ENCODE measurements at regions of chr1 and their contacts with region 1.

Region 1: DNA sequence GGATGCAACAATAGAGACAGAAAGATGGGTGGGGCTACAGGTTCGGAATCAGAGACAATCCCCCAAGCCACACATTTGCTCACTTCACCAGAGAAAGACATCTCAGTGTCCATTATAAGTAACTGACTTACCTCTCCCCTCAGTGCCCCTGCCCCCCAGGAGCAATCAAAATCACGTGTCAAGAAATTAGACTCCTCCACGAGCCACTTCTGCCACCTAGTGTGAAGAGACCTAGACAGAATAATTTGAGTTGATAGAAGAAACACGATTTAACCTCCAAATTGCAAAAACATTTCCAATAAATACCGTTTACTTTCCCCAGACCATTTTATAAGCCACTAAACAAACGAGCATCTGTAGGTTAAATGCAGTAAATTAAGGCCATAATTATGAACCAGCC is 123.2 kb downstream of the SLC30A10 start:
- DNase-seq: no peak
- ATAC-seq: no peak
- H3K4me3 ChIP-seq: no peak overlapping the region
- H3K27ac ChIP-seq: no peak overlapping the region
- H3K4me1 ChIP-seq: no peaks in the 10 kb centered on the region
- H3K27me3 ChIP-seq: peaks cover 0 to 3% (median 0%) of the 10 kb centered on the region in 9 donors
- CTCF ChIP-seq: peak in 11 of 12 donors; percentile 9 to 42 (median 24)
- POLR2A ChIP-seq: no peak

Region 2: GRCh38 chr1:219304227-219305226 is 500.7 kb before region 1 on chr1:
- intact Hi-C with region 1: loop called in 1 of 10 experiments (anchors 5 kb)
- DNase-seq: peak in 4 of 5 donors; percentile 32 to 60 (median 49)
- ATAC-seq: peak; percentile 75 to 93 (median 78)
- H3K4me3 ChIP-seq: peak overlapping the region in 7 of 12 donors; percentile 3 to 29 (median 10)
- H3K27ac ChIP-seq: peak overlapping the region in 11 of 12 donors; percentile 12 to 89 (median 70)
- H3K4me1 ChIP-seq: peaks cover 0 to 22% (median 6%) of the 10 kb centered on the region in 12 donors
- H3K27me3 ChIP-seq: no peaks in the 10 kb centered on the region
- CTCF ChIP-seq: peak in 3 of 12 donors; percentile 8 to 12 (median 11)
- POLR2A ChIP-seq: no peak

Region 3: DNA sequence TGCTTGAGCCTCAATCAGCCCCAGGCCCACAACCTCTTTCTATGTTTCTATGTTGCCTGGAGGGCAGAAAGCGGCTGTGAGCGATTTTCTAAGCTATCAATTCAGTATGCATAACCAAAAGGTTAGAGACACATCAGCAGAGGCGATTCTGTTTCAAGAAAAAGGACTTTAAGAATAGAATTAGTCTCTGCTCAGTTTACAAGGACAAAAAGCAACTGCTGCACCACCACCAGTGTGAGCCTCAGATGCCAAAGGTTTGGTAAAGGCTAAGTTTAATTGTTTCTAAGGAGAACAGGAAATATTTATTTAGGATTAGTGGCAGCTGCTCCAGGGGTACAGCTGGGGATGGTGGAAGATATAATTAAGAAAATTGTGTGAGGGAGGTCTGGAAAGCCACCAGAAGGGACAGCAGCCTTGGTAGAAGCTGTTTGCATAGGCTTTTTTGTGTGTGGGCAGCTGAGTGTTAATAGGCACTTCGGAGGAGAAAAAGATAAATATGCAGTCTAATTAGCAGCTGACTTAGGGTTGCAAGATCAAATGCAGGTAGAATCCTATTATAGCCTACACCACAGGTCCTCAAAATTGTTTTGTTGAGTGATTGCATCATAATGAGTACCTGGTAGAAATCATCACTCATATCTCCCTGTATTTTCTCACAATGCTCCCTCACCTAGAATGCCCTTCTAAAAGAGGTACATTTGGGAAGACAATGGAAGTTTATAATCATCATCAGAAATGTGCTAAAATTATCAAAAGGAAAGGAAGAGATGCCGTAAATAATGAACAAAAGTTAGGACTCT is 228.1 kb before region 1 on chr1:
- intact Hi-C with region 1: loop called in 4 of 10 experiments (anchors 5 to 10 kb)
- DNase-seq: no peak
- ATAC-seq: no peak
- H3K4me3 ChIP-seq: no peak overlapping the region
- H3K27ac ChIP-seq: no peak overlapping the region
- H3K4me1 ChIP-seq: peaks cover 0 to 12% (median 5%) of the 10 kb centered on the region in 12 donors
- H3K27me3 ChIP-seq: no peaks in the 10 kb centered on the region
- CTCF ChIP-seq: no peak
- POLR2A ChIP-seq: no peak

Region 4: DNA sequence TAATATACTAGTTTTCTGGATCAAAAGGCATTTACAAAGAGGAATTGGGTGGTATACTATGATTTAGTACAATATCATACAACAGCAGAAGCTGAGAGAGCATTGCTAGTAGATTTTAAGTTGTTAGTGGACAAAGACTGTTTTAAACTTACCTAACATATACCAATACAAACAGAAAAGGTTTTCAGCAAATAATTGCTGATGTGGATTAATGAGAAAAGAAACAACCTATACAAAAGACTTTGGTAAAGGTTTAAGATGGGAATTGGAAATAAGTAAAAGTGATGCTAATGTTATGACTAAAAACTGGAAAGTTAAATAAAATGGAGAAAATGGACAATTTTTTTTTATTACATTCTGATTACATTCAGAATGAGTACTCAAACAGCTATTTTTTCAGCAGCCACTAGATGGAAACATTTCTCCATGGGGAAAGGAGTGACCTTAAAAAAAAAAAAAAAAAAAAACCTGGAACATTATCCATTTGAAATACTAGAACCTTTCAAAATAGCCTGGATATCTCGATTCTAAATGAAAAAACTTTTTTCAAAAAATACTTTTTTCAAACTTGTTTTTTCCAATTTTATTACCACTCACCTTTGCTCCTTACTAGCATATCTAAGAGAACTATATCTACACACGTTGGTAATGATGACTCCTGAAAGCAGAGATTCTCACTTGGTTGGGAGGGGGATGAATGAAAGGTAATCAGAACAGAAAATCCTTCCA is 185.8 kb after region 1 on chr1:
- intact Hi-C with region 1: no loop called
- DNase-seq: no peak
- ATAC-seq: no peak
- H3K4me3 ChIP-seq: no peak overlapping the region
- H3K27ac ChIP-seq: no peak overlapping the region
- H3K4me1 ChIP-seq: no peaks in the 10 kb centered on the region
- H3K27me3 ChIP-seq: no peaks in the 10 kb centered on the region
- CTCF ChIP-seq: peak; percentile 39 to 74 (median 54)
- POLR2A ChIP-seq: no peak